ENCODE measurements at regions of chr11 and their contacts with region 1.

Region 1: DNA sequence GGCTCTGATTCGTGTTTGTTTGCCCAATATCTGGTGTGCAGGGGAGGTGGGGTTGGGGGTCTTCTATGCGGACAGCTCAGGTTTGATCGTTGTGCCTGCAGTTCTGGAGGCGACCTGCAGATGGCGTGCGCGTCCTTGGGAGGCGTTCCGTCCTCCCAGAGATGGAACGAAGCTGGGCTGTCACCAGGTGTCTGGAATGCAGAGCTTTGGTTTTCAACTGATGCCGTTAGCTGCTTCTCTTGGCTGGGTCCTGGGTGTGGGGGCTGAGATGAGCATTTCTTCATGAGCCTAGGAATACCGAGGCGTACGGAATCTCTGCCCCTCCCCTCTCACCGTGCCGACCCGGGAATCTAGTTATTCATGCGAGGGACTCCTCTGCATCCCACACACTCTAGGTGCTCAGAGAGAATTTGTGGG is 98.6 kb downstream of the CEP164 start:
- DNase-seq: peak; percentile 91
- H3K4me3 ChIP-seq: peak overlapping the region in 1 of 2 experiments; percentile 31; a peak in 1 of 4 replicates
- H3K27ac ChIP-seq: no peak overlapping the region
- H3K4me1 ChIP-seq: peaks cover 0 to 10% of the 10 kb centered on the region in 2 experiments; a peak in 1 of 4 replicates
- H3K27me3 ChIP-seq: no peaks in the 10 kb centered on the region
- CTCF ChIP-seq: peak; percentile 95
- EP300 ChIP-seq: no peak
- RAD21 ChIP-seq: peak; percentile 95

Region 2: DNA sequence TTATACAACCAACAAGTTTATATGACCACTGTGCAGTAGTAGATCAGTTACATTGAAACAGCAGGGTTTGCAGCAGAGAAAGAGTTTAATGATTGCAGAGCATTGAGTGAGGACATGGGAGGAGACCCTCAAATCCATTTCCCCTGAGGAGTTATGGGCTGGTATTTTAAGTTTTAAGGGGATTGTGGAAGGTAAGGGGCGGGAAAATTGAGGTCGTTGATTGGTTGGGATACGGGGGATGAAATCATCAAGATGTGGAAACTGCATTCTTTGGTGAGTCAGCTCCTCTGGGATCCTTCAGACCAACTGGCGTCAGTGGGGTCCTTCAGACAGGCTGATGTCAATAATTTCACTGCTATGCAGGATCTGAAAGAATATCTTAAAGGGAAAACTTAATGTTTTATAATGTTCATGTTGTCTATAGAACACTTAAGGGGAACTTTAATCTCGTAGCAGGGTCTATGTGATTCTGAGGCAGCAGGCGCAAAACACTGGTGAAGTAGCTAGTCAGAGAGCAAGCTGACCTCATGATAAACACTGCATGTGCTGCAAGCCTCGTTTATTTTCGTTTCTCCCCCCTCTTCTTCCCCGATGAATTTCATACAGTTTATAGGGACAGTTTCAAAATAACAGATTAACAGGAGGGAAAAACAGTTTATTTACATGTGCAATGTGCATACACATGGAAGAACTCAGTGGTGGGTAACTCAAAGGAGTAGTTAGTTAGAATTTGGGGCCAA is 152.6 kb before region 1 on chr11:
- CTCF ChIA-PET with region 1: no interaction called
- POLR2A ChIA-PET with region 1: no interaction called
- DNase-seq: no peak
- H3K4me3 ChIP-seq: no peak overlapping the region
- H3K27ac ChIP-seq: peak overlapping the region in 1 of 2 experiments; percentile 80; a peak in 2 of 4 replicates
- H3K4me1 ChIP-seq: 0 out of 4 replicates have a peak, but pooled peaks cover 0 to 10% of the 10 kb centered on the region in 2 experiments
- H3K27me3 ChIP-seq: no peaks in the 10 kb centered on the region
- CTCF ChIP-seq: no peak
- EP300 ChIP-seq: peak in 1 of 2 experiments; percentile 57; a peak in 1 of 4 replicates
- RAD21 ChIP-seq: no peak

Region 3: DNA sequence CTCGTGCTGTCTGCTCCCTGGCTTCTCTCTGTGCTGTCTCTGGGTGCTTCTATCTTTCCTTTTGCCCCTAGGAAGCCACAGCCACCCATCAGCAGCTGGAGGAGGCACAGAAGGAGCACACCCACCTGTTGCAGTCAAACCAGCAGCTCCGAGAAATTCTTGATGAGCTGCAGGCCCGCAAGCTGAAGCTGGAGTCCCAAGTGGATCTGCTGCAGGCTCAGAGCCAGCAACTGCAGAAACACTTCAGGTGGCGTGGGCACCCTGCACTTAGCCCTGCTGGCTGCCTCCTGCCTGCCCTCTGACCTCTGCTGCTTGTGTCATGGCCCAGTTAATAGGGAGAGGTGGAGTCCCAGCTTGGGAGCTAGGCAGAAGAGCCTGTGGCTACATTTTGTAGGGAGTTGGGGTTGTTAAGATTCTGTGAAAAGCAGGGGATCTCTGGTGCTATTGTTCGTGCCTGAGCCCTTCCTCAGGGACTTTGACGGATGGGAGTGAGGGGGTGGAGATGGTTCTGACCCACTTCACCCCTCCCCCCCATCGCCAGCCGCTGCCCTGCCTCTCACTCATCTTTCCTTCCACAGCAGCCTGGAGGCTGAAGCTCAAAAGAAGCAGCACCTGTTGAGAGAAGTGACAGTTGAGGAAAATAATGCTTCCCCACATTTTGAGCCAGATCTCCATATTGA is 30.7 kb before region 1 on chr11:
- CTCF ChIA-PET with region 1: interaction called, 12 read pairs
- POLR2A ChIA-PET with region 1: interaction called, 3 read pairs
- DNase-seq: no peak
- H3K4me3 ChIP-seq: no peak overlapping the region
- H3K27ac ChIP-seq: no peak overlapping the region
- H3K4me1 ChIP-seq: no peaks in the 10 kb centered on the region
- H3K27me3 ChIP-seq: no peaks in the 10 kb centered on the region
- CTCF ChIP-seq: no peak
- EP300 ChIP-seq: no peak
- RAD21 ChIP-seq: no peak

Region 4: GRCh38 chr11:117489999-117490679 is 63.9 kb after region 1 on chr11:
- CTCF ChIA-PET with region 1: interaction called, 17 read pairs
- POLR2A ChIA-PET with region 1: interaction called, 5 read pairs
- DNase-seq: peak; percentile 75
- H3K4me3 ChIP-seq: no peak overlapping the region; a peak in 1 of 4 replicates
- H3K27ac ChIP-seq: peak overlapping the region in 1 of 2 experiments; percentile 98; a peak in 2 of 4 replicates
- H3K4me1 ChIP-seq: peaks cover 0 to 74% of the 10 kb centered on the region in 2 experiments; a peak in 1 of 4 replicates
- H3K27me3 ChIP-seq: no peaks in the 10 kb centered on the region; the same call in 1 of the 2 replicates
- CTCF ChIP-seq: no peak
- EP300 ChIP-seq: peak in 1 of 2 experiments; percentile 89; a peak in 2 of 4 replicates
- RAD21 ChIP-seq: no peak

Region 5: DNA sequence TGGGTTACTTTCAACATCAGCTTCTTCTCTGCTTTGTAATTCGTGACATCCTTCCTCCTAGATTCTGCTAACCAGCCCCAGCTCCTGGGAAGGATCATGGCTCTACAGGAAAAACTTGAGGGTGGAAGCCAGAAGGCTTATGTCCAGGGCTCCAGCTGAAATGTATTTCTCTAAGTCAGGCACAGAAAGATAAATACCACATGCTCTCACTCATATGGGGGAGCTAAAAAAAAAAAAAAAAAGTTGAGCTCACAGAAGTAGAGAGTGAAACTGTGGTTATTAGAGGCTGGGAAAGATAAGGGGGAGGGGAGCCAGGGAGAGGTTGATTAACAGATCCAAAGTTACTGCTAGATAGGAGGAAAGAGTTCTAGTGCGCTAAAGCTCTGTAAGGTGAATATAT is 295.8 kb after region 1 on chr11:
- CTCF ChIA-PET with region 1: interaction called, 14 read pairs
- POLR2A ChIA-PET with region 1: no interaction called
- DNase-seq: no peak
- H3K4me3 ChIP-seq: no peak overlapping the region
- H3K27ac ChIP-seq: no peak overlapping the region; a peak in 1 of 4 replicates
- H3K4me1 ChIP-seq: peaks cover 0 to 37% of the 10 kb centered on the region in 2 experiments; a peak in 2 of 4 replicates
- H3K27me3 ChIP-seq: 0 out of 2 replicates have a peak, but pooled peaks cover 4% of the 10 kb centered on the region
- CTCF ChIP-seq: no peak
- EP300 ChIP-seq: 0 out of 4 replicates have a peak, but pooled peaks of 1 of the 2 experiments have one; percentile 9
- RAD21 ChIP-seq: no peak

Region 6: DNA sequence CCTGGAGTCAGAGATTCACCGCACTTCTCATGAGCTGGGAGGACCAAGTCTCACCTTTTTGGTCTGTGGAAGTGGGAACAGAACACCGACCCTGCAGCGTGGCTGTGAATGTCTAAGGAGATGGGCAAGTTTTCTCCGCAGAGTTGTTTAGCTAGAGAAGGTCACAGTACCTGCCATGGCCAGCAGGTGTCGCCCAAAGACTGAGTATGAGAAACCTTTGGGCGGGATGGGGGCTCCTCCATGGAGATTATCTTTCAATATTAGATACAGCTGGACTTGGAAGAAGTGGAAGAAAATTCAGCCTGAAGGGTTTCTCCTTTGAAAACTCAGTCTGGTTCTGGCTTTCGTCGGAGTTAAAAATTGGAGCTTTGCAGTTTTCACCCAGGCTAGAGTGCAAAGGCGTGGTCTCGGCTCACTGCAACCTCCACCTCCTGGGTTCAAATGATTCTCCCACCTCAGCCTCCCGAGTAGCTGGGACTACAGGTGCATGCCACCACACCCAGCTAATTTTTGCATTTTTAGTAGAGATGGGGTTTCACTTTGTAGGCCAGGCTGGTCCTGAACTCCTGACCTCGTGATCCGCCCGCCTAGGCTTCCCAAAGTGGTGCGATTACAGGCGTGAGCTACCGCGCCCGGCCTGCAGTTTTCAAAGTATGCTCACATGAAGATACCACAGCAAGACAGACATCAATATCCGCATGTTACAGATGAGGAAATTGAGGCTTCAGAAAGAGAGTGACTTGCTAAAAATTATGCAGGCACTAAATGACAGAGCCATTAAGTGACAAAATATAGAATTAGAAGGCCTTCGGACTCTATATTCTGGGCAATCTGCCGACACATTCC is 381.4 kb after region 1 on chr11:
- CTCF ChIA-PET with region 1: interaction called, 449 read pairs
- POLR2A ChIA-PET with region 1: interaction called, 3 read pairs
- DNase-seq: peak; percentile 79
- H3K4me3 ChIP-seq: no peak overlapping the region; a peak in 1 of 4 replicates
- H3K27ac ChIP-seq: no peak overlapping the region
- H3K4me1 ChIP-seq: peaks cover 0 to 5% of the 10 kb centered on the region in 2 experiments; a peak in 1 of 4 replicates
- H3K27me3 ChIP-seq: peaks cover 12% of the 10 kb centered on the region; the same call in 1 of the 2 replicates
- CTCF ChIP-seq: peak; percentile 92
- EP300 ChIP-seq: no peak
- RAD21 ChIP-seq: peak; percentile 84

Region 7: DNA sequence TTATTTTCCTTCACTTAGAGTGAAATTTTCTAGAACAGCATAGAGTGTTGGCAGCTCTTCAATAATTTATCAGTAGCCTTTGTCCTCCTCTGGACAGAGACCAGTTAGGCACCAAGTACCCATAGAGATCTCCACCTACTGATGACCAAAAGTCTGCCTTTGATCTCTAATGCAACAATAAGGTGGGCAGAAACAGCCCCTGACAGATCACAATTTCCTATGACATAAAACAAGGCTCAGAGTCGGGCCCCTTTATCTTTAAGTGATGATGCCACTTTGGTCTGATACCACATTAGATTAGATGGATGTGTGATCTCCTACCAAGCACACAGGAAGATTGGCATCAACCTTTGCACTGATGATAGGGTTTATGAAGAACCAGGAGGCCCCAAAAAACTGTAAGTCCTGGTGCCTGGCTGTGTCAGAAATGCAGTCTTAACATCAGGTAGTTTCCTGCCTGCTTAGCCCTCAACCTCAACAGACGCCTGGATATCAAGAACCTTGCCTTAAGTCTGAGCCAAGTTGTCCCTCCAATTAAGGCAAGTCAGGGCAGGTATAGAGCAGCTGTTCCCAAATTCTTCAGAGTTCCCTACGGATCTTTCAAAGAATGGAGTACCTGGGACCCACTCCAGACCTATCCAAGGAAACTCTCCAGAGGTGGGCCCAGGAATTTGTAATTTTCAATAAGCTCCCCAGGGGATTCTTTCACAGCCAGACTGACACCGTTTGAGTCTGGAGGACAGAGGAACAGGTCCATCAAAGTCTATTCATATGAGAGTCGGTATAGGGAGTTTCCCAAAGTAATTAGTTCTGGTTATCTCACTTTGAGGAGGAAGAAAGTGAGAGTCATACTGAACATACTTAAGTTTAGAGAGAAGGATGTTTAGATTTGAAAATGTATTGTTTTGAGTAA is 620.0 kb after region 1 on chr11:
- CTCF ChIA-PET with region 1: interaction called, 10 read pairs
- POLR2A ChIA-PET with region 1: no interaction called
- DNase-seq: no peak
- H3K4me3 ChIP-seq: no peak overlapping the region
- H3K27ac ChIP-seq: no peak overlapping the region
- H3K4me1 ChIP-seq: no peaks in the 10 kb centered on the region
- H3K27me3 ChIP-seq: peaks cover 8% of the 10 kb centered on the region; the same call in 1 of the 2 replicates
- CTCF ChIP-seq: no peak
- EP300 ChIP-seq: no peak
- RAD21 ChIP-seq: no peak

Measured in SK-N-SH (cell line).